AG04450 (cell line): ENCODE measurements at regions of chr6 and their contacts with region 1.

Region 1: DNA sequence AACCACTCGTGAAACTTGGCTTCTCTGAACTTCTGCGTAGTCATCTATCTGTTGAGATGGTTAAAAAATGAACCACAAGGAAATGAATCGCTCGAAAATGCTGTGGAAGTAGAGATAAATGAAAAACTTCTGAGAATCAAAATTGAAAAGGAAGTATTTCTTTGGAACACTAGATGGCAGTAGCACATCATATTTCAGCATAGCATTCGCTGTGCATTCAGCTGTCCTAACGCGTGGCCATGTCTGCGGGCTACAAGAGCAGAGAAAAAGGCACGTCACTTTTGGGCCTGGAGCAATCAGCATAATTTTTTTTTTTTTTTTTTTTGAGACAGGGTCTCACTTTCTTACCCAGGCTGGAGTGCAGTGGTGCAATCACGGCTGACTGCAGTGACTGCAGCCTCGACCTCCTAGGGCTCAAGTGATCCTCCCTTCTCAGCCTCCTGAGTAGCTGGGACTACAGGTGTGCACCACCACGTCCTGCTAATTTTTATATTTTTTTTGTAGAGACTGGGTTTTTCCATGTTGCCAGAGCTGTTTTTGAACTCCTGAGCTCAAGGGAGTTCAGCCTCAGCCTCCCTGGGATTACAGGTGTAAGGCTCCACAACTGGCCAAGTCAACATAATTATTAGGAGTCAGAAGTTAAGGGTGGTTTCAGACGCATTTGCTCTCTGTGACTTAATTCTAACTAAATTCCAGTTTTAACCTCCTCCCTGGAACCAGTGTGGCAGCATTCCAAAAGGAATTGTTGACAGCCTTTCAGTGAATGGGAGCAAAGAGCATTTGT is 8.8 kb upstream of the PERP start:
- DNase-seq: peak; percentile 37
- H3K4me3 ChIP-seq: no peak overlapping the region
- H3K27ac ChIP-seq: no peak overlapping the region
- H3K27me3 ChIP-seq: peaks cover 23% of the 10 kb centered on the region
- CTCF ChIP-seq: peak; percentile 65

Region 2: DNA sequence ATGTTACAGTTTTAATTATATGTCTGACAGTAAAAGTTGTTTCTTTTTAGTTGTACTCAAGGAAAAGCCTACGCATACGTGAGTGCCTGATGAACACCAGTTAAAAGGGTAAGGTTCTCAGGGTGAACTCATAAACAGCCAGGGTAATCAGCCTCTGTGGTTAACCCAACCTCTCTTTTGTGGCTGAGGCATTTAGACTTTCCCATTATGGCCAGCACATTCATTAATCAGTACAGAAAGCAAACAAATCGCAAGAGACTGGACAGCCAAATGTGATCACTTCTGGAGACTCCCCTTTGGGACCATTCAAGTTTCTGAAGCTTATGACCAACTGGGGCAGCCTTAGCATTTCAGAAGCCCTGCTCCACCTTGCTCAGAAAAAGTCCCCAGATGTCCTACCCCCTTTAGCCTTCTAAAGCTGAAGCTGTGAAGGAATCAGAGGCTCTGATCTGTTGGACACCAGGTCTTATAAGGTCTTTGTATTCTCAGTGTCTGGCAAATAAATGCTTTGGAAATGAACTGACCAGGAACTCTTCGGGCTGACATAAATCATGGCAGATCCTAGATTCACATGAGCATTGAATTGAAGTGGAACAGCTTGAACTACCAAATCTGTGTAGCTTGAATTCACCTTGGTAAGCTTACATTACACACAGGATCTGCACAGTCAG is 1090.1 kb before region 1 on chr6:
- CTCF ChIA-PET with region 1: interaction called, 12 read pairs
- POLR2A ChIA-PET with region 1: no interaction called
- DNase-seq: no peak
- H3K4me3 ChIP-seq: no peak overlapping the region
- H3K27ac ChIP-seq: no peak overlapping the region
- H3K27me3 ChIP-seq: peaks cover 2% of the 10 kb centered on the region
- CTCF ChIP-seq: no peak

Region 3: DNA sequence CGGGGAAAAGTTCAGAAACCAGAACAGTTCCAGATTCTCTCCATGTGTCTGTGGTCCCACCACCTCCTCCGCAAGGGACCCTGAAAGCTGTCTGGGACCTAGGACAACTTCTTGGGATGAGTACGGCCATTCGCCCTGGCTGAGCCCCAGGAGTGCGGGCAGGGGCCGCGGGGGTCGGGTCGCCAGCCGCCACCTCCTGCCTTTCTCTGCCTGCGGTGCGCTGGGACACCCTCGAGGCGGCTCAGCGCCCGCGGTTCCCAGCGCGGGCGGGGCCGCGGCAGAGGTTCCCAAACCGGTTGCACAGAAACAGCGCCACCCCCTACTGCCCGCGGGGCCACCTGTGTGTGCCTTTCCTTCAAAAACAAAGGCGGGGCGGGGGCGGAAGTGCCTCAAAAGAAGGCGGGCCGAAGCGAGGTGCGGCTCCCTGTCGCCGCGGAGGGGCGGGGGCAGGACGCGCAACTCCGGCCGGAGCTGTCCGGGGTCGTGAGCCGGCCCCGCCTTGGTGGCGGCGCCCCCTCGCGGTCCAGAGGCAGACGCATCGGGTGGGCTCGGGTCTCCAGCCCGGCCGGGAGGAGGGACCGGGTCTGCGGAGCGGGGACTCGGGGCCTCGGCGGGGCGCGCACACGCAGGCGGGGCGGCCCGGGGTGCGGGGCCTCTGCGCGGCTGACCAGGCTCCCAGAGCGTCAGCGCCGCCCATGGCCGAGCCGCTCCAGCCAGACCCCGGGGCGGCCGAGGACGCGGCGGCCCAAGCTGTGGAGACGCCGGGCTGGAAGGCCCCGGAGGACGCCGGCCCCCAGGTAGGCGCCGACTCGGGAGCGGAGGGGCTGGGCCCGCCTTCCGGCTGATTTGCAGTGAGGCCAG is 288.0 kb after region 1 on chr6 and contains the start of gene HEBP2:
- CTCF ChIA-PET with region 1: interaction called, 17 read pairs
- POLR2A ChIA-PET with region 1: no interaction called
- DNase-seq: no peak
- H3K4me3 ChIP-seq: peak within 1 kb of the TSS; percentile 74
- H3K27ac ChIP-seq: no peak within 1 kb of the TSS
- H3K27me3 ChIP-seq: peaks cover 2% of the 10 kb centered on the region
- CTCF ChIP-seq: peak; percentile 41
- polyA plus RNA-seq, gene HEBP2: 10.1 and 16.8 TPM in 2 replicates

Region 4: DNA sequence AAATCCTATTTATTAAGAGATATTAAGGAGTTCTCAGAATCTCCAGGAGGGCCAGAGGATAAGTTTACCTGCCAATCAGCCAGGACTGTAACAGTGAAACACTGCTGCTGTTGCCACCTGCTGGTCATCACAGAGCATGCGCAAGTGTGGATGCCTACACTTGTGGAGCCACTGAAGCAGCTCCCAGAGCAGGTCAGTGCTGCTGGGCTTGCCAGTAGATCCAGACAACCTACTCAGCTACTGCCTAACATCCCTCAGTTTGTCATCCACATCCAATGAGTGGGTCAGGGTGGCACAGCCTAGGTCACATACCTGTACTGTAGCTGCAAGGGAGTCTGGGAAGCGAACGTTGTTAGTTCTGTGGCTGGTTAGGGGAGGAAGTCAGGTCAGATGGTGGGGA is 401.6 kb after region 1 on chr6:
- CTCF ChIA-PET with region 1: interaction called, 18 read pairs
- POLR2A ChIA-PET with region 1: no interaction called
- DNase-seq: no peak
- H3K4me3 ChIP-seq: no peak overlapping the region
- H3K27ac ChIP-seq: no peak overlapping the region
- H3K27me3 ChIP-seq: no peaks in the 10 kb centered on the region
- CTCF ChIP-seq: peak; percentile 59

Region 5: GRCh38 chr6:138765896-138766655 is 650.0 kb after region 1 on chr6:
- CTCF ChIA-PET with region 1: interaction called, 44 read pairs
- POLR2A ChIA-PET with region 1: no interaction called
- DNase-seq: peak; percentile 8
- H3K4me3 ChIP-seq: no peak overlapping the region
- H3K27ac ChIP-seq: no peak overlapping the region
- H3K27me3 ChIP-seq: no peaks in the 10 kb centered on the region
- CTCF ChIP-seq: peak; percentile 60